H1 (cell line): ENCODE measurements at regions of chr6 and their contacts with region 1.

Region 1: GRCh38 chr6:71012866-71013469 is 56.1 kb upstream of the B3GAT2 start:
- DNase-seq: no peak
- H3K4me3 ChIP-seq: no peak overlapping the region
- H3K27ac ChIP-seq: no peak overlapping the region
- H3K4me1 ChIP-seq: no peaks in the 10 kb centered on the region; a peak in 2 of 7 replicates
- H3K27me3 ChIP-seq: no peaks in the 10 kb centered on the region
- CTCF ChIP-seq: peak in 2 of 3 experiments; percentile 79 to 81; a peak in 3 of 4 replicates
- EP300 ChIP-seq: no peak
- POLR2A ChIP-seq: no peak
- RAD21 ChIP-seq: peak; percentile 92 to 95

Region 2: GRCh38 chr6:70700922-70701876 is 311.8 kb before region 1 on chr6:
- CTCF ChIA-PET with region 1: interaction called, 13 read pairs
- POLR2A ChIA-PET with region 1: no interaction called
- DNase-seq: no peak
- H3K4me3 ChIP-seq: no peak overlapping the region
- H3K27ac ChIP-seq: no peak overlapping the region
- H3K4me1 ChIP-seq: no peaks in the 10 kb centered on the region
- H3K27me3 ChIP-seq: no peaks in the 10 kb centered on the region
- CTCF ChIP-seq: no peak
- EP300 ChIP-seq: no peak
- POLR2A ChIP-seq: no peak
- RAD21 ChIP-seq: no peak

Region 3: DNA sequence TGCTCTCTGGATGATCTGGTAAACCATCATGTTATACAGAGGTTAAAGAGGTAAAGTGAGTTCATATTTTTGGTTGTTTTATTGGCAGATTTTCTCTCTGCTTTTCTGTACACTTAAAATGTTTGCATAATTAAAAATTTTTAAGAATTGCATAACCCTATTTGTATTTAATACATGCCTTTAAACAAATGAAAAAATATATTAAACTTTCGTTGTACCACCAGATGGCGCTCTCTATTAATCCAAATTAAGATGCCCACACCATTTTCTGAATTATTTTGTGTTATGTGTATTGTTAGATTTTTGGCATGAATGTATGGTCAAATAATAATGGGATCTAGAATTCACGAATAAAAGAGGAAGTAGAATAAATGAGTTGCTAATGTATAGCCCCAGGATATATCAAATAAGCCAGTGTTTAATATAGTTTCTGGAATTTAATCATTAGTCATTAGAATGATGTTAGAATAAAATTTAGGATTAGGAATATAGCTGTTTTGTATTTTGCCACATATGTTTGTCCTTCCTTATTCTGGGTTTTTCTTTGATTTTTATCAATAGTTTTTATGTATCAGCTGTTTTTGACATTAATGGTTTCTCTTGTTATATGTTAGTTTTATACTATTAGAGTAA is 306.4 kb before region 1 on chr6:
- CTCF ChIA-PET with region 1: interaction called, 32 read pairs
- POLR2A ChIA-PET with region 1: no interaction called
- DNase-seq: no peak
- H3K4me3 ChIP-seq: no peak overlapping the region
- H3K27ac ChIP-seq: no peak overlapping the region
- H3K4me1 ChIP-seq: peaks cover 0 to 6% (median 0%) of the 10 kb centered on the region in 4 experiments; a peak in 1 of 7 replicates
- H3K27me3 ChIP-seq: no peaks in the 10 kb centered on the region
- CTCF ChIP-seq: peak in 2 of 3 experiments; percentile 13 to 39; a peak in 2 of 4 replicates
- EP300 ChIP-seq: no peak
- POLR2A ChIP-seq: no peak
- RAD21 ChIP-seq: peak; percentile 51 to 63

Region 4: GRCh38 chr6:70797625-70798024 is 215.3 kb before region 1 on chr6:
- CTCF ChIA-PET with region 1: no interaction called
- POLR2A ChIA-PET with region 1: no interaction called
- DNase-seq: no peak
- H3K4me3 ChIP-seq: no peak overlapping the region
- H3K27ac ChIP-seq: no peak overlapping the region
- H3K4me1 ChIP-seq: no peaks in the 10 kb centered on the region
- H3K27me3 ChIP-seq: no peaks in the 10 kb centered on the region
- CTCF ChIP-seq: no peak
- EP300 ChIP-seq: no peak
- POLR2A ChIP-seq: no peak
- RAD21 ChIP-seq: no peak

Region 5: GRCh38 chr6:70955441-70956190 is 57.4 kb before region 1 on chr6:
- CTCF ChIA-PET with region 1: interaction called, 15 read pairs
- POLR2A ChIA-PET with region 1: no interaction called
- DNase-seq: peak; percentile 70 to 99
- H3K4me3 ChIP-seq: peak overlapping the region; percentile 16 to 68 (median 38)
- H3K27ac ChIP-seq: no peak overlapping the region
- H3K4me1 ChIP-seq: peaks cover 0 to 4% (median 1%) of the 10 kb centered on the region in 4 experiments; a peak in 4 of 7 replicates
- H3K27me3 ChIP-seq: peaks cover 14 to 51% (median 39%) of the 10 kb centered on the region in 4 experiments
- CTCF ChIP-seq: peak; percentile 95 to 98 (median 95)
- EP300 ChIP-seq: no peak; a peak in 1 of 3 replicates
- POLR2A ChIP-seq: no peak
- RAD21 ChIP-seq: peak; percentile 84 to 92

Region 6: GRCh38 chr6:71043902-71044301 is 30.9 kb after region 1 on chr6:
- CTCF ChIA-PET with region 1: interaction called, 15 read pairs
- POLR2A ChIA-PET with region 1: no interaction called
- DNase-seq: no peak
- H3K4me3 ChIP-seq: no peak overlapping the region
- H3K27ac ChIP-seq: no peak overlapping the region
- H3K4me1 ChIP-seq: no peaks in the 10 kb centered on the region; a peak in 1 of 7 replicates
- H3K27me3 ChIP-seq: no peaks in the 10 kb centered on the region
- CTCF ChIP-seq: peak in 2 of 3 experiments; percentile 7 to 21; a peak in 2 of 4 replicates
- EP300 ChIP-seq: no peak
- POLR2A ChIP-seq: no peak
- RAD21 ChIP-seq: no peak; a peak in 1 of 4 replicates

Region 7: GRCh38 chr6:71056656-71057055 is 43.7 kb after region 1 on chr6:
- CTCF ChIA-PET with region 1: no interaction called
- POLR2A ChIA-PET with region 1: no interaction called
- DNase-seq: no peak
- H3K4me3 ChIP-seq: no peak overlapping the region
- H3K27ac ChIP-seq: no peak overlapping the region
- H3K4me1 ChIP-seq: no peaks in the 10 kb centered on the region
- H3K27me3 ChIP-seq: no peaks in the 10 kb centered on the region
- CTCF ChIP-seq: no peak
- EP300 ChIP-seq: no peak
- POLR2A ChIP-seq: no peak
- RAD21 ChIP-seq: no peak